Left lung (tissue), 14 donors: ENCODE measurements at regions of chr10 and their contacts with region 1.

Region 1: DNA sequence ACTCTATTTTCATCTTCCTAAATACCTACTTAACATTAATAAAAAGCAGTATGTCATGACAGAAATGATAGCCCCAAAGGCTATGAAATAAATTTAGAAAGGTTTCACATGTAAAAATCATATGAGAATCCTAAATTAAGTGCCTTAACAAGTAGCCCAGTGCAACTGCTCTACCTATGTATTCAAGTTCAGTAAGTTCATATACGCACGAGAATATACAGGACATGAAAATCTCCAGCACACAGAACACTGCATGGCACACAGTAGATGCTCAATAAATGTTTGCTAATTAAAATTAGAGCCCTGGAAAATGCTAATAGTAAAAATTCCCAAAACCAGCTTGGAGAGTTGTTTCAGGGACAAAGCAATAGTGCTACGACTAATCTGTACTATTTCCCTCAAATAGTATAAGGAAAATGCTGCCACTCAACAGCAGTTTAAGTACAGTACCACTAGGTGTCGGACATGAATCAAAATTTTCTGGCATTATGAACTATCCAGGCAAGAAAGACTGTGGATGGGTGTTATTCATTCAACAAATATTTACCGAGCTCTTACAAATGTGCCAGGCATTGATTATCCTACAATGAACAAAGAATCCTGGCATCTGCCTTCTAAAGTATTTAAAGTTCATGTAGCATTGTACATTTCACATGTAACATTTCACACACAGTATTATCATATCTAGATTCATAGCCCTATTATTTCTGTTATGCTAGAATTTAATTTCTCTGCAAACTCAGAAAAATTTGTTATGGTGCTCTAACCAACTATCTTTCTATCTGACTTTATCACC is 80.9 kb downstream of the ARHGAP21 start:
- DNase-seq: peak in 2 of 4 donors; percentile 54 to 71
- ATAC-seq: peak; percentile 98
- H3K4me3 ChIP-seq: no peak overlapping the region
- H3K27ac ChIP-seq: no peak overlapping the region
- H3K4me1 ChIP-seq: peaks cover 0 to 9% of the 10 kb centered on the region in 2 donors
- H3K27me3 ChIP-seq: no peaks in the 10 kb centered on the region
- CTCF ChIP-seq: peak; percentile 72 to 76

Region 2: GRCh38 chr10:24724381-24725228 is 81.8 kb after region 1 on chr10:
- intact Hi-C with region 1: loop called in 1 of 2 experiments (anchors 10 kb)
- DNase-seq: peak; percentile 96 to 98 (median 97)
- ATAC-seq: peak; percentile 90
- H3K4me3 ChIP-seq: peak overlapping the region; percentile 54 to 79
- H3K27ac ChIP-seq: peak overlapping the region; percentile 93 to 97
- H3K4me1 ChIP-seq: peaks cover 0 to 34% of the 10 kb centered on the region in 2 donors
- H3K27me3 ChIP-seq: peaks cover 0 to 13% of the 10 kb centered on the region in 2 donors
- CTCF ChIP-seq: no peak

Region 3: DNA sequence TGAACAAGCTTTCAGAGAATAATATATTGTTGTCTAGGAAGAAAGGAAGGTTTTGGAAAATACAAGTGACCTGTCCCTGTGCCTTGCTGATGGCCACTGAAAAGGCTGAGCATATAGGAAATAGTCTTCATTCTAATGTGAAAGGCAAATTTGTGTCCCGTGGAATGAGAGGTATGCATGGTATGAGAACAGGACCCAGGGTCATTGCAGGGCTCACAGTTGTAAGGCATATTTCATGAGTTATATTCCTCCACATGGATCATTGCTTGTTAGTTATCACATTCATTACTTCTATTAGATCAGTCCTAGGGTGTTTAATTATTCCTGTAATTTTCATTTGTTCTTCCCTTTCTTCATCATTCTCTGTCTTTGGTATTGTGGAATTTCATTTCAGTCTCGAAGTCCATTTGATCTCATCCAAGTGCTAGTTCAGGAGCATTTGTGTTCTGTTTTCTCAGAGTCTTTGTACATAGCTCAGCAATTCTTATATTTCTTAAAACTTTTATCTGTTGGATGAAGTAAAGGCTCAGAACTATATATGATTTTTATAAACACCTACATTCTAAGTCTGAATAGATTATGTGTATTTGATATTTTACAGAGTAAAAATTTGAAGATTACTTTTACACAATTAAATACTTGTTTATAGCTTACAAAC is 120.3 kb after region 1 on chr10:
- intact Hi-C with region 1: no loop called
- DNase-seq: no peak
- ATAC-seq: peak; percentile 80
- H3K4me3 ChIP-seq: no peak overlapping the region
- H3K27ac ChIP-seq: no peak overlapping the region
- H3K4me1 ChIP-seq: no peaks in the 10 kb centered on the region
- H3K27me3 ChIP-seq: no peaks in the 10 kb centered on the region
- CTCF ChIP-seq: no peak

Region 4: DNA sequence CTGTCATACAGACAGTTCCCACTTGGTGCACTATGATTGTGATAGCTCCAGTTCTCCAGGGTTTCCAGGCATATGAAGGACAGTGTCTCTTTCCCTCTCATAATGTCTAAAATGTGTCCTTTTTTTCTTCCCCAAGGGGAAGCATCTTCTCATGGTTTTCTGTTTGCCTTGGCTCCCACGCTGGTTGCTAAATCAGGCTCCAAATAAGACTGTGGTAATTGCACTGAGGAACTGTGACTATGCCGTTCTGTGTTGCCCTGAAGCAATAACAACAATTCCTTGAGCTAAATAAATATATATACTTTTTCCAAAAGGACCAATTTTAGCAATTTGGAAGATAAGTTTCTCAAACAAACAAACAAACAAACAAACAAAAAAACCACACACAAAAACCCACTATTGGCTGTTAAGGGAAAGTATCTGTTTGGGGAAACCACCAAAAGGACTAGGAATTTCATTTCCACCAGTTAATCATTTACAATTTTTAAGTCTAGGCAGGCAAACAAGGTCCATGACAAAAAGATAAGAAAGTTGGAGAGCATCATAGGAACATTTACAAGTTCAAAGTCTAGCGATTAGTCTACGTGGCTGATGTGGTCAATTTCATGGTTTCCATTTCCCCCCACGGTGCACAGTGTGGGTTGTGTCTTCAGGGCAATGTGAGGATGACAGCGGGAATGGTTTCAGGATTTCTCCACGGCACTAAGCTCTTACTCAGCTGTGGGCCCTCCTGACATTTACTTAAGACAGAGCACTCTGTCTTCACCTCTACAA is 436.0 kb after region 1 on chr10:
- intact Hi-C with region 1: loop called in 1 of 2 experiments (anchors 10 kb)
- DNase-seq: no peak
- ATAC-seq: no peak
- H3K4me3 ChIP-seq: no peak overlapping the region
- H3K27ac ChIP-seq: no peak overlapping the region
- H3K4me1 ChIP-seq: peaks cover 4 to 8% of the 10 kb centered on the region in 2 donors
- H3K27me3 ChIP-seq: no peaks in the 10 kb centered on the region
- CTCF ChIP-seq: no peak